Ascending aorta (tissue), 2 donors: ENCODE measurements at regions of chr15 and their contacts with region 1.

Region 1: DNA sequence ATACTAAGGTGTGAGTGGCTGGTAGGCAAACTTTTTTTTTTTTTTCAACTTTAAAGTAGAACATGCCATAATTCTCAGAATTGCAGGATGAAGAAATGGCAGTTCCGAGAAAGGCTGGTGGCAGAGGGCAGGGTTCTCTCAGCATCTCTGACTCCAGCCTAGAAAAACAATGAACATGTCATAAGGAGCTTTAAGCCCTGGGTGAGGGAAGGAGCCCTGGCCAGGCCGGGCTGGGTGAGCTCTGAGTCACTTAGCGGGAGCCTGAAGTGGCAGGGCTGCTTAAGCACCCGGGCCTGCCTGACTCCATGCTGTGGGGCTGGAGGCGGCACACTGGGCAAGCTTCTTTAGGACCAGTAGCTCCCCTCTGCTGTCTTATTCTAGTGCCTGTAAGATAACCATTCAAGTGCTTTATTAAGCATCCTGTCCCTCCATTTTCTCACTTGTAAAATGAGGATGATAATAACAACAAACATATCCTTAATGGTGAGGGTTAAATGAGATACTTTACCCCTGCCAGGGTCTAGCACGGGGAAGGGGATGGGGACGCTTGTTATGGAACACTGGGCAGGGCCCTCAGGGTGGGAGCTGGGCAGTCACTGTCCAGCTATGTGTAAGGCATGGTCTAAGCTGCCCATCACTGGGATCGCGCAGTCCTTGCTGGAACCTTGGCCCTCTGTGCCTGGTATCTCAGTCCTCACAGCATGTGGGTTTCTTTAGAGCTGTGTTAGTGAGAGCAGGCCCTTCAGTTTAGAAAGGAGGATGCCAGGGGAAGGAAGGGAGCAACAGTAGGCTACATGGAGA is 18.4 kb downstream of the SMAD6 start:
- DNase-seq: peak; percentile 71 to 94
- H3K4me3 ChIP-seq: no peak overlapping the region
- H3K27ac ChIP-seq: peak overlapping the region; percentile 88 to 96
- H3K4me1 ChIP-seq: peaks cover 25 to 56% of the 10 kb centered on the region in 2 donors
- H3K27me3 ChIP-seq: no peaks in the 10 kb centered on the region
- CTCF ChIP-seq: no peak

Region 2: DNA sequence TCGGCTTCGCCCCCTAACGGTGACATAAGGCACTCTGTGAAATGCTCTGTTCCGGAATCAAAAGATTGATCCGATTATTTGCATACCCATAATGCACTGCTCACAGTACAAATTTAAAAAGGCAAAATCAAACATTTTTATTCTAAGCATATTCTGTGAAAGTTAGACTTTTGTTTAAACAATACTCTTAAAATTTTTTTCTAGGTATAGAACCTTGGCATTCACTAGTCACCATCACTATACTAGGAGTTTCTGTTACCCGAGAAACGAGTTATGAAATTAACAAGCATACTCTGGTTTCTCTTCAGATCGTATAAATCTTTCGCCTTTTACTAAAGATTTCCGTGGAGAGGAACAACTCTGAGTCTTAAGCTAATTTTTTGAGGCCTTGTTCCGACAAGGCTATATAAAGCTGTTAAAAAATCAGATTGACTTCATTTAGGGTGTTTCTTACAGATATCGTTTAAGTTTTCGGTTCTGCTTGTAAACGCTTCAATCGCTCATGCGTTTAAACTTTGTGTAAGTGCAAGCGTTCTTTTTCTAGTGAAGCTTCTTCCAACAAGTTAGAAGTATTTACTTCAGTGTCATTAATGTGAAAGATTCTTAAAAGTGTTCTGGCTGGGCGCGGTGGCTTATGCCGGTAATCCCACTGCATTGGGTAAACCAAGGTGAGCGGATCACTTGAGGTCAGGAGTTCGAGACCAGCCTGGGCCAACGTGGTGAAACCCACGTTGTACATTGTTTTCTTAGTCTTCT is 1415.8 kb before region 1 on chr15 and contains the start of gene RNU5B-1:
- intact Hi-C with region 1: loop called (anchors 5 kb)
- DNase-seq: peak in 1 of 2 donors; percentile 85
- H3K4me3 ChIP-seq: peak within 1 kb of the TSS; percentile 58 to 73
- H3K27ac ChIP-seq: peak within 1 kb of the TSS; percentile 81 to 85
- H3K4me1 ChIP-seq: peaks cover 0 to 9% of the 10 kb centered on the region in 2 donors
- H3K27me3 ChIP-seq: no peaks in the 10 kb centered on the region
- CTCF ChIP-seq: peak; percentile 74 to 87 (median 79)
- total RNA-seq, gene RNU5B-1: not detected

Region 3: GRCh38 chr15:66638377-66638776 is 82.0 kb before region 1 on chr15:
- intact Hi-C with region 1: no loop called
- DNase-seq: no peak
- H3K4me3 ChIP-seq: no peak overlapping the region
- H3K27ac ChIP-seq: no peak overlapping the region
- H3K4me1 ChIP-seq: no peaks in the 10 kb centered on the region
- H3K27me3 ChIP-seq: no peaks in the 10 kb centered on the region
- CTCF ChIP-seq: no peak

Region 4: GRCh38 chr15:66763186-66764066 is 43.0 kb after region 1 on chr15:
- intact Hi-C with region 1: loop called (anchors 2 kb)
- DNase-seq: peak; percentile 63 to 96
- H3K4me3 ChIP-seq: no peak overlapping the region
- H3K27ac ChIP-seq: peak overlapping the region; percentile 76 to 95
- H3K4me1 ChIP-seq: peaks cover 33 to 78% of the 10 kb centered on the region in 2 donors
- H3K27me3 ChIP-seq: no peaks in the 10 kb centered on the region
- CTCF ChIP-seq: no peak